Activated CD8-positive, alpha-beta T cell treated with anti-CD3 and anti-CD28 coated beads for 36 hours (primary cell): ENCODE measurements at regions of chr12 and their contacts with region 1.

Region 1: DNA sequence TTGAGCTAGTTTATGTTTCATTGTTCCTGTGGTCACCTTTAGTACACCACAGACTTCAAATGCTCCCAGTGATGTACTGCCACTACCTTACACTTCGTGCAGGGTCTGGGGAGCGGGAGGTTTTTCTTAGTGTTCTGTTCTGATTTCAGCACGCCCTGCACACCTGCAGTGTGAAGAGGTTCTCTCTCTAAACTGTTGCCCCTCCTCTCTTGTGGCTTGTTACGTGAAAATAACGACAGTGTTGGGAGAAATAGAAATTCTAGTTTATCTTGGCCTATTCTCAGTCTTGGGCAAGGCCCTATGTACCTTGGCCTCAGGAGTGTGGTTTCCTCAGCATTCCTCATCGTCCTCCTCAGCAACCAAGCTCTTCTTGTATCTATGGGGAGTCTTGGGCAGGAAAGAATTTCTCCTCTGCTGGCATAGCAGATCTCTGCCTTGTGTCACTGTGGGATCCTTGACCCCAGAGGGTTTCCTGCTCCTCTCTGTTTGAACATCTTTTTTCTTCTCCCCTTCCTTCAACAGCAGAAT is 48.6 kb downstream of the EIF2S3B start:
- DNase-seq: peak; percentile 68
- ATAC-seq: peak; percentile 38
- H3K4me3 Mint-ChIP-seq: peak overlapping the region; percentile 86
- H3K27ac Mint-ChIP-seq: peak overlapping the region; percentile 99
- H3K4me1 Mint-ChIP-seq: peaks cover 51% of the 10 kb centered on the region
- H3K27me3 Mint-ChIP-seq: no peaks in the 10 kb centered on the region
- CTCF ChIP-seq: no peak

Region 2: DNA sequence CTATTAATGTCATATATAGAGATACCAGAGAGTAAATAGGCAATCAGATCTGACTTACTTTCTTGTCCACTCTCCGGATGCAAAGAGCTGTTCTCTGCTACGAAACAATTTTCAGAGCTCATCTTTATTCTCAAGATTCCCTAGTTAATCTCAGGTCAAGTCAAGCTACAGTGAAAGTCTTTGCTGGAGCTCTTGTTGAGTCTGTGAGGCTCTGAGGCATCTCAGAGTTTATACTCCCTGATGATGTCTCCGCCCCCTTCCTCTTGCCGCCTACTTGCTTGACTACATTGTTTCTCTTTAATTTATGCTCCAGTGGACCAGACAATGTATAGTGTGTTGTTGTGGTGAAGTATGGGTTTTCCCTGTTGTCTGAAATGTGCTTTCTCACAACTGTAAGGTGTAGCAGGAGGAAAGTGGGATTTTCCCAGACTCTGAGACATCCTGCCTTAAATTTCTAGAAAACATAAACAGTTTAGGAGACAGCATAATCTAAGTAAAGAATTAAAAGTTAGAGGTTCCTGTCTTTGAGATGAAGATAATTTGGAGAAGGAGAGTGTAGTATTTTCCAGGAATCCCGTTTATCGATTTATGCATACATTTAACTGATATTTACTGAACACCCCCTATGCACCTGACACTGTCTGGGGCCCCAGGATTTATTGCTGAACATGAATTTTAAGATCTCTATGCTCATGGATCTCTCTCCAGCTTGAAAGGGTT is 793.4 kb before region 1 on chr12 and contains the start of gene CD69:
- CTCF ChIA-PET with region 1: no interaction called
- POLR2A ChIA-PET with region 1: interaction called, 53 read pairs
- intact Hi-C with region 1: no loop called
- DNase-seq: peak; percentile 89
- ATAC-seq: peak; percentile 57
- H3K4me3 Mint-ChIP-seq: peak within 1 kb of the TSS; percentile 97
- H3K27ac Mint-ChIP-seq: peak within 1 kb of the TSS; percentile 99
- H3K4me1 Mint-ChIP-seq: peaks cover 34% of the 10 kb centered on the region
- H3K27me3 Mint-ChIP-seq: no peaks in the 10 kb centered on the region
- CTCF ChIP-seq: no peak
- total RNA-seq, gene CD69: 166 to 174 TPM

Region 3: GRCh38 chr12:10385166-10385613 is 169.1 kb before region 1 on chr12:
- CTCF ChIA-PET with region 1: interaction called, 8 read pairs
- POLR2A ChIA-PET with region 1: interaction called, 139 read pairs
- intact Hi-C with region 1: loop called (anchors 5 kb)
- DNase-seq: no peak
- ATAC-seq: peak; percentile 68
- H3K4me3 Mint-ChIP-seq: peak overlapping the region; percentile 90
- H3K27ac Mint-ChIP-seq: peak overlapping the region; percentile 92
- H3K4me1 Mint-ChIP-seq: peaks cover 47% of the 10 kb centered on the region
- H3K27me3 Mint-ChIP-seq: no peaks in the 10 kb centered on the region
- CTCF ChIP-seq: no peak

Region 4: DNA sequence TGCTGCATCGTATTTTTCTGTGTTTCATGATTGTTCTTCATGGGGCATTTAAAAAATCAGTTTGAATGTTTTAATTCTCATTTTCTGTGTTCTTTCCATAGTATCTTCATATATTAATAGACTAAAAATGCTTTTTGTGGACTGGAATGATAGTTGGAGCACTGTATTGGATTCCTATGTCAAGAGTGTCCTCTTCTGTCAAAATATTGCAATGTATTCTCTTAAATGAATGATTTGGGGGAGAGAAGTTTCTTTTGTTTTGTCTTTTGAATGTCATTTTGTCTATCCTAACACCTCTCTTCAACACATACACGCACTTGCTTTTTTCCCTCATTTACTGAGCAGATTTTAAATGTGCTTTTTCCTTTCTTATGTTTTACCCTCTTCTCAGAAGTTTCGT is 53.3 kb before region 1 on chr12:
- CTCF ChIA-PET with region 1: interaction called, 4 read pairs
- POLR2A ChIA-PET with region 1: interaction called, 17 read pairs
- intact Hi-C with region 1: loop called (anchors 5 kb)
- DNase-seq: no peak
- ATAC-seq: no peak
- H3K4me3 Mint-ChIP-seq: peak overlapping the region; percentile 47
- H3K27ac Mint-ChIP-seq: peak overlapping the region; percentile 78
- H3K4me1 Mint-ChIP-seq: peaks cover 65% of the 10 kb centered on the region
- H3K27me3 Mint-ChIP-seq: no peaks in the 10 kb centered on the region
- CTCF ChIP-seq: peak; percentile 38

Region 5: DNA sequence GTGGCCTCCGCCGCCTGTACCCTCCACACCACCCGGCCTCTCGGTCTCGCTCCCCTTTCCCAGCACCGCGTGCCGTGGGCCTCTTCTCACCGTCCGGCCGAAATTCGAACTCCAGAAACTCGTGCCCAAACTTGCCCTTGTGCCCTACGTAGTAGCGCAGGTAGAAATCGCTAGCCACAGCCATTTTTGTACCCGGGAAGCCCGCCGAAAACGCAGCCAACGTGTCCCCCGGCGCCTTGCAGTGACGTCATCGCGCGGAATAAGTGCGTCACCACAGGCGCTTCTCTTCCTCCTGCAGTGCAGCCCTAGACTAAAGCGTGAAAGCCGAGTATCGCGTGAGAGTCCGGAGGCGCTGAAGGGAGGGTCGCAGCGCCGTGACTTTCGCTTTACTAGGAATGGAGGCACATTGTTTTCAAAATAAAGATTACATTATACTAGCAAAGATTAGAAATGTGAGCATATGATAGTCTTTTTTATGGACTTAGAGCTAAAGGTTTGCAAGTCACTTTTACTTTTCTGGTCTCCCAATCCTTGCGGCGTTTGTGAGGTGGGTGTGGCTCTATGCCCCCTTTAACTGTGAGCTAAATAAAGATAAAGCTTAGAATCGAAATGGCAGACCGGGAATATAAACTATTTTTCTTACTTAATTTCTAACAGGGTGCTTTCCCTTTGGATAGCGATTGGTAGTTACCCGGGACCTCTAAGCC is 59.2 kb after region 1 on chr12 and contains the start of gene MAGOHB:
- CTCF ChIA-PET with region 1: no interaction called
- POLR2A ChIA-PET with region 1: interaction called, 4 read pairs
- intact Hi-C with region 1: loop called (anchors 2 kb)
- DNase-seq: peak; percentile 99
- ATAC-seq: peak; percentile 97
- H3K4me3 Mint-ChIP-seq: peak within 1 kb of the TSS; percentile 100
- H3K27ac Mint-ChIP-seq: peak within 1 kb of the TSS; percentile 100
- H3K4me1 Mint-ChIP-seq: peaks cover 30% of the 10 kb centered on the region
- H3K27me3 Mint-ChIP-seq: peaks cover 2% of the 10 kb centered on the region
- CTCF ChIP-seq: no peak
- total RNA-seq, gene MAGOHB: 80.4 to 85.6 TPM

Region 6: DNA sequence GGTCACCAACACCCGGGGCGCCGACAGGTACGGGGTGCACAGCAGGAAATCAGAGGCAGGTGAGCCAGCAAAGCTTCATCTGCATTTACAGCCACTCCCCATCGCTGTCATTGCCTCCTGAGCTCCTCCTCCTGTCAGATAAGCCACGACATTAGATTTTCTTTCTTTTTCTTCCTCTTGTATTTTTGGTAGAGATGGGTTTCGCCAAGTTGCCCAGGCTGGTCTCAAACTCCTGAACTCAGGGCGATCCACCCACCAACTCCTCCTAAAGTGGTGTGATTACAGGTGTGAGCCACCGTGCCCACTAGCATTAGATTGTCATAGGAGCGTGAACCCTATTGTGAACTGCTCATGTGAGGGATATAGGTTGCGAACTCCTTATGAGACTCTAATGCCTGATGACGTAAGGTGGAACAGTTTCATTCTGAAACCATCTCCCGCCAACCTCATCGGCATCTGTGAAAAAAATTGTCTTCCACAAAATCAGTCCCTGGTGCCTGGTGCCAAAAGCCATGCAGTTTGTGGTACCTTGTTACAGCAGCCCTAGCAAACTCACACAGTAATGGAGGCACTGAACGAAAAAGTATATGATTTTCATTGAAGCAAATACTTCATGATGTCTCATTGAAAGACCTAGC is 118.1 kb after region 1 on chr12:
- CTCF ChIA-PET with region 1: no interaction called
- POLR2A ChIA-PET with region 1: no interaction called
- intact Hi-C with region 1: no loop called
- DNase-seq: peak; percentile 50
- ATAC-seq: peak; percentile 45
- H3K4me3 Mint-ChIP-seq: peak overlapping the region; percentile 71
- H3K27ac Mint-ChIP-seq: peak overlapping the region; percentile 14
- H3K4me1 Mint-ChIP-seq: peaks cover 41% of the 10 kb centered on the region
- H3K27me3 Mint-ChIP-seq: peaks cover 13% of the 10 kb centered on the region
- CTCF ChIP-seq: no peak